ENCODE measurements at regions of chr16 and their contacts with region 1.

Region 1: DNA sequence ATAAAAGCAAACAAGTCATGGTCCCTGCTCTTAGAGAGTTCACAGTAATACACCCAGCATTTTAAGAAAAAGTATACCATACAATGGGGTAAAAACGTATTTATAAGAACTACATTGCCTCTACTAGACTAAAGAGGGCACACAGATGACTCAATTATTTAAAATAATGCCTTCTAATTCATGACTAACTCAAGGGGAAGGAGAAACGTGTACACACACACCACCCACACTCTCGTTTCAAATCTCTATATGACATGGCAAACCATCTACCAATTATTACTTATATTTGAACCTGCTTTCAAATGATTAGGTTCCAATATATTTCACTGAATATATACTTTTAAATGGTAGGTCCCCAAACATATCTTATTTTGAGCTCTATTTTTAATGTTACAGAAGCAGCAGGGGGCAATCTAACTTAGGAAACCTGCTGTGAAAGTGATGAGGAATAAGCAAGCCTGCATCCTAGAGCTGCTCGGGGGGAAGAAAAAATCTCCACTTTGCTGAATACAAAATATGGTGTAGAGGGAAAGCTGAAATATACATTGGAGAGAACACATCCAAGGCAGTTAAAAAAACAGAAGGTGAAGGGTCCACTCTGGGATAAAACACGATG is 232.4 kb upstream of the PSMD7 start:
- DNase-seq: no peak
- ATAC-seq: no peak
- H3K4me3 ChIP-seq: no peak overlapping the region
- H3K27ac ChIP-seq: no peak overlapping the region
- H3K4me1 ChIP-seq: no peaks in the 10 kb centered on the region
- H3K27me3 ChIP-seq: peaks cover 26% of the 10 kb centered on the region; the same call in 1 of the 2 replicates
- CTCF ChIP-seq: peak; percentile 21; the same call in 1 of the 2 replicates

Region 2: DNA sequence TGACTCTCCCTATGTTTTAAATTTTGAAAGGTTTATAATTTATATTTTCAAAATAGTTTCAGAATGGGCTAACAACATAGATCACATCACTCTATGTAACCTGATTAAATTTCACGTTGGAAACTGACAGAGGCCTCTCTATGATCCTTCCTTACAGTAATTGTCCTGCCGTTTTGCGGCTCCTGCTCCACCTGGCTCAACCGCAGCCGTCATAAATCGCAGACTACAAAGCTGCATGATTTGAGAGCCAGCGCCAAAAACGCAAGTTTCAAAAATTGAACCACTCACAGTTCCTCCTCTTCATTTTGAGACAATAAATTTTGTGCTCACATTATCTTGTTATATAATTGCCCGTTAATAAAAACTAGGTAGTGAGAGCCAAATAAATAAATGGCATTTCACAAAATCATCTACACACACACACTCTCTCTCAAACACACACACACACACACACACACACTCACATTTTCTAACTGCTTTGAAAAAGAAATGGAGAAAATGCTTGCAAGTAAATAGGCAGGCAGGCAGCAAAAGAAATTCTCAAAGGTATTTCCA is 30.7 kb before region 1 on chr16:
- CTCF ChIA-PET with region 1: no interaction called
- POLR2A ChIA-PET with region 1: no interaction called
- intact Hi-C with region 1: no loop called
- DNase-seq: no peak
- ATAC-seq: no peak
- H3K4me3 ChIP-seq: no peak overlapping the region
- H3K27ac ChIP-seq: no peak overlapping the region
- H3K4me1 ChIP-seq: no peaks in the 10 kb centered on the region
- H3K27me3 ChIP-seq: peaks cover 30% of the 10 kb centered on the region
- CTCF ChIP-seq: no peak

Region 3: GRCh38 chr16:74113545-74113944 is 49.3 kb after region 1 on chr16:
- CTCF ChIA-PET with region 1: no interaction called
- POLR2A ChIA-PET with region 1: no interaction called
- intact Hi-C with region 1: no loop called
- DNase-seq: no peak
- ATAC-seq: no peak
- H3K4me3 ChIP-seq: no peak overlapping the region
- H3K27ac ChIP-seq: no peak overlapping the region
- H3K4me1 ChIP-seq: no peaks in the 10 kb centered on the region
- H3K27me3 ChIP-seq: no peaks in the 10 kb centered on the region
- CTCF ChIP-seq: no peak

Region 4: GRCh38 chr16:74226338-74226954 is 162.2 kb after region 1 on chr16:
- CTCF ChIA-PET with region 1: interaction called, 10 read pairs
- POLR2A ChIA-PET with region 1: no interaction called
- intact Hi-C with region 1: no loop called
- DNase-seq: peak; percentile 25
- ATAC-seq: no peak
- H3K4me3 ChIP-seq: no peak overlapping the region
- H3K27ac ChIP-seq: no peak overlapping the region
- H3K4me1 ChIP-seq: no peaks in the 10 kb centered on the region
- H3K27me3 ChIP-seq: peaks cover 33% of the 10 kb centered on the region
- CTCF ChIP-seq: peak; percentile 53